T-cell (primary cell): ENCODE measurements at regions of chr20 and their contacts with region 1.

Region 1: DNA sequence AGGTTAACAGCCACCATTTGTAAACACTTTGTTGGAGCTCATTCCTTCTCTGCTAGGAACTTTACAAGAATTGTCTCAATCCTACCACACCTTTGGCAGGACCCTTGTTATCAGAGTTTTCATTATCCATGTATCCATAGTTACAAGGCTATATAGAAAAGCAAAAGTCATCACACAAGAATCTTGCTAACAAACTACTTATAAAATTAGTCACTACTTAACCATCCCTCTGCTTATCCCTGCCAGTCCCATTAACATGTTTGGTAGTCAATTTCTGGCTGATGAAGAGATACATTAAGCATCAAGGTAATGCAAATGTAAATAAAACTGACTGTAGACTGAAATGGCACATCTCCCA is 10.4 kb downstream of the ZSWIM3 start:
- DNase-seq: no peak
- ATAC-seq: no peak
- H3K4me3 ChIP-seq: no peak overlapping the region
- H3K4me3 Mint-ChIP-seq: no peak overlapping the region
- H3K27ac ChIP-seq: no peak overlapping the region
- H3K27ac Mint-ChIP-seq: no peak overlapping the region
- H3K4me1 ChIP-seq: no peaks in the 10 kb centered on the region
- H3K4me1 Mint-ChIP-seq: peaks cover 0 to 2% (median 0%) of the 10 kb centered on the region in 3 donors
- H3K27me3 ChIP-seq: no peaks in the 10 kb centered on the region
- H3K27me3 Mint-ChIP-seq: no peaks in the 10 kb centered on the region

Region 2: GRCh38 chr20:45823949-45824835 is 43.6 kb before region 1 on chr20:
- CTCF ChIA-PET with region 1: no interaction called
- POLR2A ChIA-PET with region 1: no interaction called
- DNase-seq: peak in 33 of 35 experiments; percentile 8 to 63 (median 31)
- ATAC-seq: peak; percentile 71 to 81 (median 80)
- H3K4me3 ChIP-seq: peak overlapping the region; percentile 43 to 66
- H3K4me3 Mint-ChIP-seq: peak overlapping the region; percentile 68 to 81 (median 76)
- H3K27ac ChIP-seq: no peak overlapping the region
- H3K27ac Mint-ChIP-seq: peak overlapping the region in 1 of 2 donors; percentile 73
- H3K4me1 ChIP-seq: peaks cover 0 to 21% of the 10 kb centered on the region in 2 experiments
- H3K4me1 Mint-ChIP-seq: peaks cover 13 to 18% (median 15%) of the 10 kb centered on the region in 3 donors
- H3K27me3 ChIP-seq: peaks cover 0 to 42% of the 10 kb centered on the region in 2 experiments
- H3K27me3 Mint-ChIP-seq: peaks cover 23 to 26% of the 10 kb centered on the region in 2 donors

Region 3: DNA sequence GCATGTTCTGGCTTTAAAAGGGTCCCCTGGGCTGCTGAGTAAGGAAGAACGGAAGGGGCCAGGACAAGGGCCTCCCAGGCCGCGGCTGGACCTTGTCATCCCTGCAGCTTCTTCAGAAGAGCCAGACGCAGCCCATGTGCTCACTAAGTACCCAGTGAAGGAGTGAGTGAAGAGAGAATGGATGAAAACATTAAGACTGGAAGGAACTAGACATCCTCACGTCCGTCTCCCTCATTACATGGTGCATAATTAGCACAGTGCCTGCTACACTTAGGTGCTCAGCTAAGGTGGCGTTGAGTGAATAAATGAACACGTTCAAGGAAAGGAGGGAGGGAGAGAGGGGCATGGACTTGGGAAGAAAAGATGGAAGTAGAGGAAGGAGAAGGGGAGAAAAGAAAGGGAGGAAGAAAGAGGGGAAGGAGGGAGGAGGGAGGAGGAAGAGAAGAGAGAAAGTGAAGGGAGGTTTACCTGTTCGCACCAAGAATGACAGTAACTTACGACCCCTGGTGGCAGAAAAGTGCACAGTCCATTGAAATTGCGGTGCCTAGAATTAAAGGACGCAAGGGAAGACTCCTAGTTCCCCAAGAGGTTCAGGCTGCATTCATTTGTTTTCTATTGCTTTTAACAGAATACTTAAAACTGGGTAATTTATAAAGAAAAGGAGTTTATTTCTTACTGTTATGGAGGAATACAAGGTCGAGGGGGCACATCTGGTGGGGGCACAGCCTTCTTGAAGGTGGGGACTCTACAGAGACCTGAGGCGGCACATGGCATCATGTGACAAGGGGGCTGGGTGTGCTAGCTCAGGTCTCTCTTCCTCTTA is 813.4 kb after region 1 on chr20:
- CTCF ChIA-PET with region 1: no interaction called
- POLR2A ChIA-PET with region 1: interaction called in 1 of 2 experiments, 11 read pairs
- DNase-seq: peak; percentile 8 to 79 (median 53)
- ATAC-seq: peak; percentile 71 to 85 (median 76)
- H3K4me3 ChIP-seq: no peak overlapping the region
- H3K4me3 Mint-ChIP-seq: no peak overlapping the region
- H3K27ac ChIP-seq: no peak overlapping the region
- H3K27ac Mint-ChIP-seq: no peak overlapping the region
- H3K4me1 ChIP-seq: peaks cover 4 to 8% of the 10 kb centered on the region in 2 experiments
- H3K4me1 Mint-ChIP-seq: peaks cover 42 to 48% (median 45%) of the 10 kb centered on the region in 3 donors
- H3K27me3 ChIP-seq: no peaks in the 10 kb centered on the region
- H3K27me3 Mint-ChIP-seq: no peaks in the 10 kb centered on the region